Dorsolateral prefrontal cortex (tissue), 120 donors: ENCODE measurements at regions of chr17 and their contacts with region 1.

Region 1: GRCh38 chr17:81094509-81095382 is 59.8 kb downstream of the BAIAP2 start:
- DNase-seq: peak in 9 of 10 donors; percentile 59 to 97 (median 87)
- H3K4me3 ChIP-seq: peak overlapping the region in 30 of 59 donors; percentile 0 to 41 (median 19)
- H3K27ac ChIP-seq: peak overlapping the region; percentile 15 to 98 (median 90)
- H3K27me3 ChIP-seq: no peaks in the 10 kb centered on the region
- CTCF ChIP-seq: peak in 2 of 56 donors; percentile 15 to 22

Region 2: GRCh38 chr17:80991645-80992076 is 103.1 kb before region 1 on chr17 and contains the start of gene CHMP6:
- intact Hi-C with region 1: no loop called
- DNase-seq: peak in 8 of 10 donors; percentile 52 to 83 (median 66)
- H3K4me3 ChIP-seq: peak within 1 kb of the TSS; percentile 57 to 99 (median 83)
- H3K27ac ChIP-seq: peak within 1 kb of the TSS in 40 of 59 donors; percentile 7 to 88 (median 62)
- H3K27me3 ChIP-seq: no peaks in the 10 kb centered on the region
- CTCF ChIP-seq: peak in 54 of 56 donors; percentile 7 to 84 (median 55)
- total RNA-seq, gene CHMP6: 15.4 to 33.4 (median 22.0) TPM

Region 3: GRCh38 chr17:81020767-81021497 is 73.8 kb before region 1 on chr17:
- intact Hi-C with region 1: loop called in 1 of 2 experiments (anchors 1 kb)
- DNase-seq: peak in 3 of 10 donors; percentile 63 to 91 (median 68)
- H3K4me3 ChIP-seq: no peak overlapping the region
- H3K27ac ChIP-seq: peak overlapping the region in 12 of 59 donors; percentile 6 to 63 (median 50)
- H3K27me3 ChIP-seq: no peaks in the 10 kb centered on the region
- CTCF ChIP-seq: no peak

Region 4: GRCh38 chr17:81034779-81035388 is 59.9 kb before region 1 on chr17 and contains the start of gene BAIAP2:
- intact Hi-C with region 1: loop called in 1 of 2 experiments (anchors 2 kb)
- DNase-seq: peak; percentile 91 to 99 (median 96)
- H3K4me3 ChIP-seq: peak within 1 kb of the TSS; percentile 43 to 80 (median 66)
- H3K27ac ChIP-seq: peak within 1 kb of the TSS in 52 of 59 donors; percentile 24 to 88 (median 71)
- H3K27me3 ChIP-seq: no peaks in the 10 kb centered on the region
- CTCF ChIP-seq: peak in 1 of 56 donors; percentile 13
- total RNA-seq, gene BAIAP2: 104 to 353 (median 235) TPM